IMR-90 (cell line): ENCODE measurements at regions of chr17 and their contacts with region 1.

Region 1: GRCh38 chr17:59093702-59094231 is 12.9 kb downstream of the TRIM37 start:
- DNase-seq: peak; percentile 97
- ATAC-seq: peak; percentile 94
- H3K4me3 ChIP-seq: peak overlapping the region; percentile 13; the same call in 1 of the 2 replicates
- H3K27ac ChIP-seq: no peak overlapping the region
- H3K4me1 ChIP-seq: peaks cover 10% of the 10 kb centered on the region
- H3K27me3 ChIP-seq: no peaks in the 10 kb centered on the region
- CTCF ChIP-seq: no peak
- POLR2A ChIP-seq: no peak; the same call in 1 of the 2 replicates
- RAD21 ChIP-seq: no peak

Region 2: GRCh38 chr17:58932964-58933363 is 160.8 kb before region 1 on chr17:
- CTCF ChIA-PET with region 1: no interaction called
- POLR2A ChIA-PET with region 1: no interaction called
- dilution Hi-C with region 1: no loop called
- in situ Hi-C with region 1: no loop called
- intact Hi-C with region 1: no loop called
- DNase-seq: no peak
- ATAC-seq: no peak
- H3K4me3 ChIP-seq: no peak overlapping the region
- H3K27ac ChIP-seq: no peak overlapping the region
- H3K4me1 ChIP-seq: no peaks in the 10 kb centered on the region
- H3K27me3 ChIP-seq: no peaks in the 10 kb centered on the region
- CTCF ChIP-seq: no peak
- POLR2A ChIP-seq: no peak
- RAD21 ChIP-seq: no peak

Region 3: GRCh38 chr17:59049798-59050197 is 44.0 kb before region 1 on chr17:
- CTCF ChIA-PET with region 1: no interaction called
- POLR2A ChIA-PET with region 1: no interaction called
- dilution Hi-C with region 1: no loop called
- in situ Hi-C with region 1: no loop called
- intact Hi-C with region 1: loop called (anchors 5 kb)
- DNase-seq: no peak
- ATAC-seq: no peak
- H3K4me3 ChIP-seq: no peak overlapping the region
- H3K27ac ChIP-seq: no peak overlapping the region
- H3K4me1 ChIP-seq: no peaks in the 10 kb centered on the region
- H3K27me3 ChIP-seq: no peaks in the 10 kb centered on the region
- CTCF ChIP-seq: no peak
- POLR2A ChIP-seq: no peak
- RAD21 ChIP-seq: no peak